HCT116 (cell line): ENCODE measurements at regions of chr1 and their contacts with region 1.

Region 1: DNA sequence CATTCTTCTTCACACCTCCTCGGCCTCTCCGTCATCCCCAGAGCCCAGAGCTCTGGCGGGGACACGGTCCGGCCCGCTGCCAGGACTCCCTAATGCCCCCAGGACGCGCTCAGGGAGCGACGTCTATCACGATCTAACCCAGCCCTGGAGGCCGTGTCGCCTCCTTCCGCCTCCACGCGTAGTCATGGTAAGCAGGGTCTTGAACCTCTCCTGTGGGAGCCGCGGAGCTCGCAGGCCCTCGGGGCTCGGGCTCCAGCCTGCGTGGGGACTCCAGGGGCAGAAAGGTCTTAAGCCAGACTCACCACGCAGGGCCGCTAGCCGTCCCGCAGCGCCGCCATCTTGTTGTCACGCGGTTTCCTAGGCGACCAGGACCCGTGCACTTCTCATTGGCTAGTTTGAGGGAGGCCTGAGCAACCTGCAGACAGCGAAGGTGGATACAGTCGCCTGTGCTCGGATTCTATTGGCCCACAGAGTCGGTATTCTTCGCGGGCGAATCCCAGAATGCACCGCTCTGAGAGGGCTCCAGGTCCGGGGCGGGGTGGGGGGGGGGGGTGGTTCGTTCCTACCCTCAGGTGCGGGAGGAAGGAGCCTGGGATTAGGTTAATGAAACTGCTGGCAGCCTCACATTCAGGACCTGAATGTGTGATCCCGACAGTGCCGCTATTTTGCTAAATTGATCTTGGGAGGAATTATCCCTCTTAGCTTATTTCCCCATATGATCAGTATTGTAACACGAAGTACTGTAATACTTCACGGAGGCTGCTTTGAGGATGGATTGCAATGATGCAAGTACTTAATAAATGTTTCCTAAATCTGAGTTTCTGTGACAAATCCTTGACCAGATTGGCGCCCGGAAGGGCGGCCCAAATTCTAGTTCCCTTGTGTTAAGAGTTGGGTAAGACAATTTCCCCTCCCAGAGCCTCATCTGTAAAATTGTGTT is at the start of gene UBXN11:
- DNase-seq: peak; percentile 94
- ATAC-seq: peak; percentile 99
- H3K4me3 ChIP-seq: peak within 1 kb of the TSS; percentile 79 to 91
- H3K27ac ChIP-seq: peak within 1 kb of the TSS; percentile 28
- H3K4me1 ChIP-seq: peaks cover 9 to 38% of the 10 kb centered on the region in 2 experiments; a peak in 3 of 4 replicates
- H3K27me3 ChIP-seq: no peaks in the 10 kb centered on the region
- CTCF ChIP-seq: no peak
- POLR2A ChIP-seq: peak; percentile 66
- RAD21 ChIP-seq: no peak
- total RNA-seq, gene UBXN11: 19.3 TPM

Region 2: DNA sequence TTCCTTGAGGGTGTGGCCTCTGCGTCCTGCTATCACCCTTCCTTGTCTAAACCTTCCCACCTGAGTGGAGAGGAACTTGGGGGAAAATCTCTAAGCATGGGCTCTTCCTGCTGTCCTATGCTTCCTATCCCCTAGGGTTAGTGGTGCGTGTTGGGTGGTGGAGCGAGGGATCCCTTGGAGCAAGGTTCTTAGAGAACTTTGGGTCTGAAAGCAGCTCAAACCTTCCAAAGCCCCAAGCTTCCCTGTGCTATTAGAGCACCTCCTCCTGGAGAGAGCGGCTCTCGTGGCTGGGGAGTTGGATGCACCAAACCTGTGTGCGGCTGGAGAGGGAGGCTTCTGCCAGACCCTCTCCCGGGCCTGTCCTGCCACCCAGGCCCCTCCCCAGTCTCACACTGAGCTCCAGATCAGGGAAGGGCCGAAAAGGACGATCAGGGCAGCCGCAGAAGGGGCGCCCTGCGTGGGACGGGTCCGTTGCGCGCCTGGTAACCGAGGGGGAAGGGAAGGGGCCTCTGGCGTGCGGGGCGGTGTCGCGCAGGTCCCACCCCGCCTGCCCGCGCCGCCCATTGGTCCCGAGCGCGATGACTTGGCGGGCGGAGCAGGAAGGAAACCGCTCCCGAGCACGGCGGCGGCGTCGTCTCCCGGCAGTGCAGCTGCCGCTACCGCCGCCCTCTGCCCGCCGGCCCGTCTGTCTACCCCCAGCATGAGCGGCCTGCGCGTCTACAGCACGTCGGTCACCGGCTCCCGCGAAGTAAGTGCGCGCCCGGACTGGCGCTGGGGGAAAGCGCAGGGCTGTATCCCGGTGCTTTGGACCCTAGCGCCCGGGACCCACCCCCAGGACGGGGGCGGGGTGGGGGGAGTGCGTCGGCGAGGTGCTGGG is 26.9 kb before region 1 on chr1 and contains the start of gene SH3BGRL3:
- CTCF ChIA-PET with region 1: interaction called, 10 read pairs
- POLR2A ChIA-PET with region 1: no interaction called
- RAD21 ChIA-PET with region 1: no interaction called
- intact Hi-C with region 1: no loop called
- DNase-seq: peak; percentile 57
- ATAC-seq: peak; percentile 79
- H3K4me3 ChIP-seq: peak within 1 kb of the TSS; percentile 74 to 76
- H3K27ac ChIP-seq: peak within 1 kb of the TSS; percentile 81
- H3K4me1 ChIP-seq: peaks cover 41 to 95% of the 10 kb centered on the region in 2 experiments
- H3K27me3 ChIP-seq: no peaks in the 10 kb centered on the region
- CTCF ChIP-seq: peak in 2 of 3 experiments; percentile 70 to 77; a peak in 4 of 6 replicates
- POLR2A ChIP-seq: peak; percentile 68
- RAD21 ChIP-seq: no peak
- total RNA-seq, gene SH3BGRL3: 112 TPM

Region 3: DNA sequence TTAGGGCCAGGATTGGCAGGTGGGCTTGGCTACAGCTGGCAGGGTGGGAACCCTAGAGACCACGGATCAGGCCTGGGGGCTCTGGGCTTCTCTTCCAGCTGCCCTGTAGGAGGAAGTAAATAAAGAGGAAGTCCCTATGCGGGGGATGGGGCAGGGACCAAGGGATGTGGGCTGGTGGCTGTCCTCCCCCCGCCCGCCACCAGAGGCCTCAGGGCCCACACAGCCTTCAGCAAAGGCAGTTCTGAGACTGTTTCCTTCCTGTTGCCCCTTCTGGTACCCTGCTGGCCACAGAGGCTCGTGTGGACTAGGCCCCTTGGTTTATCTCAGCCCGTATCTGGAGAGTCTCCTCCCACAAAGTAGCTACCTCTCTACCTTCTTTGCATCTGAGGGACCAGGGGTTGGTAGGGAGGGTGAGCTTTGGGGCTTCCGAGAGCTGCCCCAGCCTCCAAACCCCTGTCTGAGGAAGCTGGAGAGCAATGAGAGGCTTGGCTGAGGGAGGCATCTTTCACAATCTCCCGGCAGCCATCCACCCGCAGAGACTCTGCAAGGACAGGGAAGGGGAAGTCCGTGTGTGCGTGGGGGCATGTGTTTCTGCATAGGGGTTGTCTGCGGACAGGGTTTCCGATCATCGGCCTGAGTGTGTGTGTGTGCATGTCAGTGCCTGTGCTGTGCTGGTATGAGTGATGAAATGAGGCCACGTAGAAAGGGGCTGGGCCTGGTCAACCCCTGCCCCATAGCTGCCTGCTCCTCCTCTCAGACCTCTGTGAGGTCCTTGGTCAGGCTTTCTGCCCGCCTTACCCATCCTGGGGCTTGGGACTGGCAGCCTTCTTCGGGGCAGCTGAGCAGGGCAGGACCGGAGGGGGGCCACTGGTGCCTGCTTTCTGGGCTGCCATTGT is 235.5 kb after region 1 on chr1:
- CTCF ChIA-PET with region 1: no interaction called
- POLR2A ChIA-PET with region 1: no interaction called
- RAD21 ChIA-PET with region 1: no interaction called
- intact Hi-C with region 1: no loop called
- DNase-seq: no peak
- ATAC-seq: peak; percentile 56
- H3K4me3 ChIP-seq: no peak overlapping the region
- H3K27ac ChIP-seq: no peak overlapping the region; the same call in 1 of the 2 replicates
- H3K4me1 ChIP-seq: peaks cover 3 to 4% of the 10 kb centered on the region in 2 experiments; a peak in 2 of 4 replicates
- H3K27me3 ChIP-seq: no peaks in the 10 kb centered on the region
- CTCF ChIP-seq: peak in 1 of 3 experiments; percentile 29; a peak in 1 of 6 replicates
- POLR2A ChIP-seq: no peak
- RAD21 ChIP-seq: no peak